Activated CD8-positive, alpha-beta T cell treated with anti-CD3 and anti-CD28 coated beads, Interleukin-2, amount 10 ng/mL, durations not matched to agents 7 days and 5 days (primary cell): ENCODE measurements at regions of chr12 and their contacts with region 1.

Region 1: DNA sequence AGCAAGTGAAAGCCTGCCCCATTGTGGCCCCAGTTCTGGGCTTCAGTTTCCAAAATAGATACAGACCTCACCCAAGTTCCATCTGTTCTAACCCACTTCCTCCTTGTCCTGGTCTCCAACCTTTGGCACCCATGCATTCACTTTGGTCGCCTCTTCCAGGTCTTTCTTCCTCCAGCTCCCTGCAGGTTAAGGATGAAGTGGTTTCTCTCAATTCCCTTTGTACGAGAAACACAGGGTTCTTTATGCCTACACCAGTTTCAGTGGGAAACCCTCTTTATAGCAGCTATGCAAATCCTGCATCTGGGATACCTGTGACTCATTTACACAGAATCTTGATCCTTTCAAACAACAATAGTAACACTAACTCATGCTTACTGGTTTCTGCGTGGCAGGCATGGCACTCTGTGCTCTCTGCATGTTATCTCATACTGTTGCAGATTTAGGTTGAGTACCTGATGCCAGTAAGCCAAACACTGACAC is 110.6 kb upstream of the AMIGO2 start:
- DNase-seq: no peak
- ATAC-seq: no peak
- H3K4me3 Mint-ChIP-seq: no peak overlapping the region
- H3K27ac Mint-ChIP-seq: peak overlapping the region; percentile 66
- H3K4me1 Mint-ChIP-seq: peaks cover 70% of the 10 kb centered on the region
- H3K27me3 Mint-ChIP-seq: no peaks in the 10 kb centered on the region

Region 2: DNA sequence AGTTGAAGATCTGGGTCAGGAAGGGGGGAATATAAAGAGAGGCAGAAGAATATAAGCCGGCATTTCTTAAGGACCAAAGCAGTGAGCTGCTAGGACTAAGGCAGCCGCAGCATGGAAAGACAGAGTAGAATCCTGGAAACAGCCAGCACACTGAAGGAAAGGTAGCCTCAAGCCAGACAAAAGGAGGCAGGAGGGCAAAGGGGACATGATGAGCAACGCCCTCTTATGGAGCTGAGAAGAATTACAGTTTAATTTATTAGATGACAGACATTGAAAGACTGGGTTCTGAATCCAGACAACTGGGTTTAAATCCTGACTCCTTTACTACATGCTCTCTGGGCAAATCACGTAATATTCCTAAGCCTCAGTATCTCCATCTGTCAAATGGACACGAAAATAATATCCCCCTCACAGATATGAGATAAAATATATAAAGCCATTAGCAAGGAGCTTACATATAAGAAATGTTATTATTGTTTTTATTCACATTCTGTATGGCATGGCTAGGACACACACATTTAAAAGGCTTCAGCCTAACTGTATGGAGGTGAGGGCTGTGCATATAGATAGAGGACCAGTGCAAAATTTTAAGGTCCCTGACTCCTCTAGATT is 119.0 kb before region 1 on chr12:
- CTCF ChIA-PET with region 1: interaction called, 49 read pairs
- POLR2A ChIA-PET with region 1: no interaction called
- DNase-seq: no peak
- ATAC-seq: peak; percentile 42
- H3K4me3 Mint-ChIP-seq: no peak overlapping the region
- H3K27ac Mint-ChIP-seq: no peak overlapping the region
- H3K4me1 Mint-ChIP-seq: peaks cover 11% of the 10 kb centered on the region
- H3K27me3 Mint-ChIP-seq: no peaks in the 10 kb centered on the region

Region 3: GRCh38 chr12:47079468-47079980 is 110.8 kb before region 1 on chr12 and contains the starts of genes AMIGO2 and PCED1B:
- CTCF ChIA-PET with region 1: interaction called, 47 read pairs
- POLR2A ChIA-PET with region 1: interaction called, 9 read pairs
- DNase-seq: peak; percentile 77
- ATAC-seq: peak; percentile 67
- H3K4me3 Mint-ChIP-seq: peak within 1 kb of the TSS; percentile 94
- H3K27ac Mint-ChIP-seq: peak within 1 kb of the TSS; percentile 90
- H3K4me1 Mint-ChIP-seq: peaks cover 62% of the 10 kb centered on the region
- H3K27me3 Mint-ChIP-seq: no peaks in the 10 kb centered on the region
- total RNA-seq, gene AMIGO2: 10.2 TPM
- total RNA-seq, gene PCED1B: 72.1 to 74.2 TPM

Region 4: GRCh38 chr12:47202176-47202575 is 11.9 kb after region 1 on chr12:
- CTCF ChIA-PET with region 1: interaction called, 48 read pairs
- POLR2A ChIA-PET with region 1: interaction called, 40 read pairs
- DNase-seq: no peak
- ATAC-seq: no peak
- H3K4me3 Mint-ChIP-seq: no peak overlapping the region
- H3K27ac Mint-ChIP-seq: no peak overlapping the region
- H3K4me1 Mint-ChIP-seq: peaks cover 53% of the 10 kb centered on the region
- H3K27me3 Mint-ChIP-seq: no peaks in the 10 kb centered on the region

Region 5: DNA sequence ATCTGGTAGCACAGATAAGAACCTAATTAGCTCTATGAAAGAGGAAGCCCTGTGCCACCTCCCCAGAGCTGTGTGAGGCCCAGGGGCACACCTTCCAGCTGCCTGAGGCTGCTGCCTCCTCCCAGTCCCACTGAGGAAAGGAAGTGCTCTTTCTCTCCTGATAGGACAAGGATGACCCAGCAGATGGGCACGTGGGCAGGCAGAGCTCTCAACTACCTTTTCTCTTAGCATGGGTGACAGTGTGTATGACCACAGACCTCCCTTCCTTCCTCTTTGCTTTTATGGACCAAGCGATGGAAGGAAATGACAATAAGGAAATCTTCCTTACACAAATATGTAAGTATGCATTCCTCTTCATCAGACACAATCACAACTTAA is 17.0 kb after region 1 on chr12:
- CTCF ChIA-PET with region 1: interaction called, 48 read pairs
- POLR2A ChIA-PET with region 1: interaction called, 44 read pairs
- DNase-seq: peak; percentile 77
- ATAC-seq: peak; percentile 70
- H3K4me3 Mint-ChIP-seq: peak overlapping the region; percentile 83
- H3K27ac Mint-ChIP-seq: peak overlapping the region; percentile 91
- H3K4me1 Mint-ChIP-seq: peaks cover 75% of the 10 kb centered on the region
- H3K27me3 Mint-ChIP-seq: no peaks in the 10 kb centered on the region

Region 6: DNA sequence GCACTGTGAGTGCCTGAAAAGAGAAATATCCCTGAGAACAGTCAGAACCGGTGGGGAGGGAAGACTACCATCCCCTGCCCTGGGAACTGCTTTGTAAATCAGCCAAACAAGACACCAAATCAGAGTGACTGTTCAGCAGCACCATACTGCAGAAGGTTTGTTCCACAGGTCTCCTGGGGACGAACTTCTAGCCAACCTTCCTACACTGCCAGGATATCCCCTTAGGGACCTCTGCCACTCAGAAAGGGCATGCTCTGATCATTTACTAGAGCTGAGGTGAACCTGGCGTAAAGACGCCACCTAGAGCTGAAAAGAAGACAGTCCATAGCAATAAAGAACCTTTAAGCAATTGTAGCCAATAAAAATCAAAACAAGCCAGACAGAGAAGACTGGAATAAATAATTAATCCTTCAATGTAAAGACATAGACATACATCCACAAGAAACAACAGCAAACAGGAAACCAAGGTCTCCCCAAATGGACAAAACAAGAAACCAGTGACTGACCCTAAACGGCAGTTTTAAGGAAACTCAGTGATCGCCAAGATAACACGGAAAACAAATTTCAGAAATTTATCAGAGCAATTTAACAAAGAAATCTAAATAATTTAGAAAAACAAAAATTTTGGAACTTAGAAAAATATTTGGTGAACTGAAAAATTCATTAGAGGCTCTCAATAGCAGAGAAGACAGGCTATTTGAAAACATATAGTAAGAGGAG is 117.5 kb after region 1 on chr12:
- CTCF ChIA-PET with region 1: interaction called, 10 read pairs
- POLR2A ChIA-PET with region 1: no interaction called
- DNase-seq: peak; percentile 76
- ATAC-seq: peak; percentile 92
- H3K4me3 Mint-ChIP-seq: peak overlapping the region; percentile 64
- H3K27ac Mint-ChIP-seq: peak overlapping the region; percentile 77
- H3K4me1 Mint-ChIP-seq: peaks cover 59% of the 10 kb centered on the region
- H3K27me3 Mint-ChIP-seq: no peaks in the 10 kb centered on the region